ENCODE measurements at regions of chr17 and their contacts with region 1.

Region 1: GRCh38 chr17:27892866-27893769 is at the start of gene LYRM9:
- DNase-seq: peak; percentile 87 to 99 (median 93)
- ATAC-seq: peak; percentile 100
- H3K4me3 ChIP-seq: peak within 1 kb of the TSS; percentile 80
- H3K4me3 Mint-ChIP-seq: peak within 1 kb of the TSS; percentile 76 to 95 (median 88)
- H3K27ac ChIP-seq: peak within 1 kb of the TSS; percentile 73
- H3K27ac Mint-ChIP-seq: peak within 1 kb of the TSS; percentile 69 to 89 (median 84)
- H3K4me1 ChIP-seq: peaks cover 0 to 13% of the 10 kb centered on the region in 2 donors
- H3K4me1 Mint-ChIP-seq: peaks cover 15 to 29% (median 26%) of the 10 kb centered on the region in 7 donors
- H3K27me3 ChIP-seq: no peaks in the 10 kb centered on the region
- H3K27me3 Mint-ChIP-seq: peaks cover 15 to 45% (median 19%) of the 10 kb centered on the region in 5 donors
- total RNA-seq, gene LYRM9: 4.2 to 24.5 (median 14.0) TPM

Region 2: DNA sequence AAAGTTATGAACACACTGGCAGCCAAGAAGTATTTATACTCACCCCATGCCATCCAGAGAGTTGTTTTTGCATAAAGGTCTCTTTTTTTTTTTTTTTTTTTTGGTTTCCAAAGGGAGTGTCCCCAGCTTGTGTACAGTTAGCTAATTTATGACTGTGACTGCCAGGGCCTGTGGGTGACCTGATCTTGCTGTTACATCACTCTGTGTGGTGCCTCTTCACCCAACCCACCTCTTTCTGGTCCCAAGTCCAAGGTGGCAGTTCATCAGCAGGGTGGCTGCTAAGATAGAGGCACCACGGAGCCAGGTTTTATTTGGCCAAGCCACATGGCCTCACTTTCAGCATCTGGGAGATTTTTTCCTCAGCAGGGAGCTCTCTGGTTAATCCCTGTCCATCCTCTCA is 92.6 kb before region 1 on chr17 and contains the start of gene NOS2:
- CTCF ChIA-PET with region 1: interaction called, 119 read pairs
- POLR2A ChIA-PET with region 1: interaction called, 88 read pairs
- intact Hi-C with region 1: loop called (anchors 1 kb)
- DNase-seq: no peak
- ATAC-seq: no peak
- H3K4me3 ChIP-seq: no peak within 1 kb of the TSS
- H3K4me3 Mint-ChIP-seq: no peak within 1 kb of the TSS
- H3K27ac ChIP-seq: no peak within 1 kb of the TSS
- H3K27ac Mint-ChIP-seq: no peak within 1 kb of the TSS
- H3K4me1 ChIP-seq: peaks cover 0 to 4% of the 10 kb centered on the region in 2 donors
- H3K4me1 Mint-ChIP-seq: peaks cover 4 to 5% (median 4%) of the 10 kb centered on the region in 7 donors
- H3K27me3 ChIP-seq: no peaks in the 10 kb centered on the region
- H3K27me3 Mint-ChIP-seq: peaks cover 14 to 29% (median 18%) of the 10 kb centered on the region in 5 donors
- total RNA-seq, gene NOS2: 0.11 to 0.30 (median 0.16) TPM in 3 of 5 experiments, not detected in the others

Region 3: GRCh38 chr17:27862004-27862403 is 31.1 kb before region 1 on chr17:
- CTCF ChIA-PET with region 1: no interaction called
- POLR2A ChIA-PET with region 1: no interaction called
- intact Hi-C with region 1: no loop called
- DNase-seq: no peak
- ATAC-seq: no peak
- H3K4me3 ChIP-seq: no peak overlapping the region
- H3K4me3 Mint-ChIP-seq: no peak overlapping the region
- H3K27ac ChIP-seq: no peak overlapping the region
- H3K27ac Mint-ChIP-seq: no peak overlapping the region
- H3K4me1 ChIP-seq: no peaks in the 10 kb centered on the region
- H3K4me1 Mint-ChIP-seq: peaks cover 0 to 7% (median 0%) of the 10 kb centered on the region in 7 donors
- H3K27me3 ChIP-seq: no peaks in the 10 kb centered on the region
- H3K27me3 Mint-ChIP-seq: peaks cover 0 to 16% (median 4%) of the 10 kb centered on the region in 5 donors

Region 4: DNA sequence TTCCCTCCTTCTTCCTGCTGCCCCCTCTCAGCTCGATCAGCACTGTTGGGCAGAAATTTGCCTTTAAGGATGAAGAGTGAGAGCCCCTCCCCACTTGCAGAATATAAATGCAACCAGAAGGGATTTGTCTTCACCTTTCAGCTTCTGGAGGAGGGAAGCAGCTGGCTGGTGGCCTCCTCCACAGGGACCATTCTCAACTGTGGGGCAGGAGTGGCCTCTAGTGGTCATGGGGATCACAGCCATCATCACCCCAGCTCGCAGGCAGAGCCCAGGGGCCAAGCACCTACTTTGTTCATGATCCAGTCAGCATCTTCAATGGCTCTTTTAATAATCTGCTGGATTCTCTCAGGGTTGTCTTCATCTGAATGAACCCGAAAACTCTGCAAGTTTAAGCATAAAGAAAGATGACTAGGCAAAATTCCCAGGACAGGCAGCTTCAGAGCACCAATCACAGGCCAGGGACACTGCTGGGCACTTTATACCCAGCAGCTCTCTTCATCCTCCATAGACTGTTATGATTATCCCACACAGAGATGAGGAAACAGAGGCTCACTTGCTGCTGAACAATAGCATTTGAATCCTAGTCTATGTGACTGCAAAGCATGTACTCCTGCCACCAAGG is 13.0 kb before region 1 on chr17:
- CTCF ChIA-PET with region 1: interaction called, 18 read pairs
- POLR2A ChIA-PET with region 1: interaction called, 11 read pairs
- intact Hi-C with region 1: loop called in 1 of 2 experiments (anchors 1 kb)
- DNase-seq: peak; percentile 23 to 70 (median 54)
- ATAC-seq: peak; percentile 84
- H3K4me3 ChIP-seq: no peak overlapping the region
- H3K4me3 Mint-ChIP-seq: peak overlapping the region in 7 of 10 donors; percentile 14 to 77 (median 51)
- H3K27ac ChIP-seq: no peak overlapping the region
- H3K27ac Mint-ChIP-seq: peak overlapping the region in 3 of 9 donors; percentile 25 to 70 (median 62)
- H3K4me1 ChIP-seq: peaks cover 4 to 16% of the 10 kb centered on the region in 2 donors
- H3K4me1 Mint-ChIP-seq: peaks cover 19 to 37% (median 24%) of the 10 kb centered on the region in 7 donors
- H3K27me3 ChIP-seq: no peaks in the 10 kb centered on the region
- H3K27me3 Mint-ChIP-seq: no peaks in the 10 kb centered on the region

Region 5: GRCh38 chr17:28252436-28252835 is 359.3 kb after region 1 on chr17:
- CTCF ChIA-PET with region 1: no interaction called
- POLR2A ChIA-PET with region 1: no interaction called
- intact Hi-C with region 1: loop called in 1 of 2 experiments (anchors 1 kb)
- DNase-seq: no peak
- ATAC-seq: no peak
- H3K4me3 ChIP-seq: no peak overlapping the region
- H3K4me3 Mint-ChIP-seq: peak overlapping the region in 2 of 10 donors; percentile 84 to 86
- H3K27ac ChIP-seq: no peak overlapping the region
- H3K27ac Mint-ChIP-seq: peak overlapping the region in 1 of 9 donors; percentile 4
- H3K4me1 ChIP-seq: peaks cover 0 to 4% of the 10 kb centered on the region in 2 donors
- H3K4me1 Mint-ChIP-seq: peaks cover 6 to 10% (median 8%) of the 10 kb centered on the region in 7 donors
- H3K27me3 ChIP-seq: no peaks in the 10 kb centered on the region
- H3K27me3 Mint-ChIP-seq: peaks cover 4 to 23% (median 9%) of the 10 kb centered on the region in 5 donors

Region 6: GRCh38 chr17:28318759-28319660 is 425.9 kb after region 1 on chr17 and contains the start of gene TMEM97:
- CTCF ChIA-PET with region 1: no interaction called
- POLR2A ChIA-PET with region 1: no interaction called
- intact Hi-C with region 1: loop called in 1 of 2 experiments (anchors 10 kb)
- DNase-seq: peak; percentile 83 to 95 (median 93)
- ATAC-seq: peak; percentile 99
- H3K4me3 ChIP-seq: peak within 1 kb of the TSS; percentile 69
- H3K4me3 Mint-ChIP-seq: peak within 1 kb of the TSS; percentile 77 to 97 (median 91)
- H3K27ac ChIP-seq: peak within 1 kb of the TSS; percentile 64
- H3K27ac Mint-ChIP-seq: peak within 1 kb of the TSS; percentile 37 to 90 (median 80)
- H3K4me1 ChIP-seq: peaks cover 11 to 12% of the 10 kb centered on the region in 2 donors
- H3K4me1 Mint-ChIP-seq: peaks cover 9 to 40% (median 21%) of the 10 kb centered on the region in 7 donors
- H3K27me3 ChIP-seq: no peaks in the 10 kb centered on the region
- H3K27me3 Mint-ChIP-seq: no peaks in the 10 kb centered on the region
- total RNA-seq, gene TMEM97: 2.9 to 19.9 (median 4.8) TPM

Measured in naive thymus-derived CD4-positive, alpha-beta T cell (primary cell).